Endothelial cell of umbilical vein (primary cell): ENCODE measurements at regions of chr6 and their contacts with region 1.

Region 1: GRCh38 chr6:79078075-79079025 is at the start of gene PHIP:
- DNase-seq: peak; percentile 96
- H3K4me3 ChIP-seq: peak within 1 kb of the TSS; percentile 81 to 98 (median 90)
- H3K27ac ChIP-seq: peak within 1 kb of the TSS; percentile 84
- H3K4me1 ChIP-seq: peaks cover 20% of the 10 kb centered on the region
- H3K27me3 ChIP-seq: no peaks in the 10 kb centered on the region
- CTCF ChIP-seq: no peak
- POLR2A ChIP-seq: peak; percentile 70
- total RNA-seq, gene PHIP: 26.0 and 28.4 TPM in 2 replicates

Region 2: DNA sequence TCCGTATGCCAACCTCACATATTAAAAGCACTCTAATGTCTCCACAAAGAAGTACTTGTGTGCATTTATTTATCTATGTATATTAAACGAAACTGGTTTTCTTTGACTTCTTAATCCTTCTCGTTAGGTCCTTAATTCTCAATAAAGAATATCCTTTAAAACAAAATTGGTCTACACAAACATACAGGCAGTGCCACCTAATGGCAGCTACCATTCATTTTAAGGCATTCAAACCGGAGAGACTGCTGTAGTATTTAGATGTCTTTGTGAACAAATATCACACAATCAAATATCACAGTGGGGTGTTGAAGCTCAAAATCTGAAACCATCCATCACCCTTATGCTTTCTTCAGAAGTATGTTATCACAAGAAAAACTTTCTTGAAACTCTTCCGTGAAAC is 307.6 kb before region 1 on chr6:
- CTCF ChIA-PET with region 1: no interaction called
- POLR2A ChIA-PET with region 1: no interaction called
- dilution Hi-C with region 1: no loop called
- intact Hi-C with region 1: loop called (anchors 5 kb)
- DNase-seq: no peak
- H3K4me3 ChIP-seq: no peak overlapping the region
- H3K27ac ChIP-seq: no peak overlapping the region
- H3K4me1 ChIP-seq: no peaks in the 10 kb centered on the region
- H3K27me3 ChIP-seq: peaks cover 0 to 9% of the 10 kb centered on the region in 2 experiments
- CTCF ChIP-seq: no peak
- POLR2A ChIP-seq: no peak

Region 3: DNA sequence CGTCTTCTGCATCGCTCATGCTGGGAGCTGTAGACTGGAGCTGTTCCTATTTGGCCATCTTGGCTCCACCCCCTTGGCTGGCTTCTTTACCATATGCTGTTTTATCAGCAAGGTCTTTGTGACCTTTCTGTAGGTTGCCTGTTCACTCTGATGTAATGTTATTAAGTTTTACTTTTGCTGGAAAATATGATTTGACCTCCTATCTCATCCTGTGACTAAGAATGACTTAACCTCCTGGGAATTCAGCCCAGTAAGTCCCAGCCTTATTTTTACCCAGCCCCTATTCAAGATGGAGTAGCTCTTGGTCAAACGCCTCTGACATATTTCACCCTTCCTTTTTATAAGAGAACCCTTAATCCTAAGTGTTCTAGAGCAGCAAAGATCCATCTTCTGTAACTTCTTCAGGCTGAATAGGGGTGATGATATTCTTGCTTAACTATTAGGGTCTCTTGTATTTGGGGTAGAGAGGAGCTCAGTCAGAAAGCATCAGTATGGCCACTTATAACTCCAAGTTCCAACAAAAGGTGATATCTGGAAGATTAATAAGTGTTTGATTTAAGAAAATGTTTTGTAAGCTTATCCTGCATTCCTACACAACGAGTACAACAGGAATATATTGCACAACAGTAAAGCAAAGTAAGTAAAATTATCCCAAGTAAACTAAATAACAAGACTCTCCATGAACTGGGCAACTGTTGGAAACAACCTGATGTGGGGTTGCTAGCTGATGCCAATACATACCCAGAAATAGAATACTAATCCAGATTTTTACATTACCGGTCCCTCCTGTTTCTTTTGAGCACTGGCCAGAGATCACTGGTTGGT is 179.2 kb after region 1 on chr6:
- CTCF ChIA-PET with region 1: no interaction called
- POLR2A ChIA-PET with region 1: no interaction called
- dilution Hi-C with region 1: no loop called
- intact Hi-C with region 1: no loop called
- DNase-seq: peak; percentile 68
- H3K4me3 ChIP-seq: no peak overlapping the region
- H3K27ac ChIP-seq: no peak overlapping the region
- H3K4me1 ChIP-seq: no peaks in the 10 kb centered on the region
- H3K27me3 ChIP-seq: no peaks in the 10 kb centered on the region
- CTCF ChIP-seq: no peak
- POLR2A ChIP-seq: no peak

Region 4: DNA sequence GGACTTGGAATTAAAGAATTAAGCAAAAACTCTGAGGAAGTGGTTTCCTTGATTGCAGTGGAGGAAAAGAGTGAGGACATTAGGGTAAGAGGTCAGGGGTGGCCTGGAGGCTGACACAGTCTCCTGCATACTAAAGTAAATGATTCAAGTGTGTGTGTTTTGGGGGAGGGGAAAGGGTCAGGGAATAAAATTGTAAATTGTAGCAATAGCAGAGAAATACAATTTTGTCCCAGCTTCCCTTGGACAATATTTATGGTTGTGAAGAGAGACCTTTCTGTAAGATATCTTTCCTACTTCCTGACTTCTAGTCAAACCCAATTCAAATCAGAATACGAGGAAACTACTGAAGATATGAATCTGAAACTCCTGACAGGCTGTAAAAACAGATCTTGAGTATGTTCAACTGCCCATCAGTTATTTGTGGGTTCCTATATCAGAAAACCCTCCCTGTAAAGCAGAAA is 299.6 kb after region 1 on chr6:
- CTCF ChIA-PET with region 1: no interaction called
- POLR2A ChIA-PET with region 1: no interaction called
- dilution Hi-C with region 1: no loop called
- intact Hi-C with region 1: loop called (anchors 5 kb)
- DNase-seq: peak; percentile 93
- H3K4me3 ChIP-seq: peak overlapping the region in 1 of 3 experiments; percentile 47
- H3K27ac ChIP-seq: peak overlapping the region; percentile 78
- H3K4me1 ChIP-seq: peaks cover 42% of the 10 kb centered on the region
- H3K27me3 ChIP-seq: no peaks in the 10 kb centered on the region
- CTCF ChIP-seq: no peak
- POLR2A ChIP-seq: peak; percentile 50

Region 5: GRCh38 chr6:79536954-79537747 is 458.8 kb after region 1 on chr6 and contains the start of gene LCA5:
- CTCF ChIA-PET with region 1: no interaction called
- POLR2A ChIA-PET with region 1: no interaction called
- dilution Hi-C with region 1: no loop called
- intact Hi-C with region 1: loop called (anchors 1 kb)
- DNase-seq: peak; percentile 98
- H3K4me3 ChIP-seq: peak within 1 kb of the TSS; percentile 66 to 94 (median 79)
- H3K27ac ChIP-seq: peak within 1 kb of the TSS; percentile 73
- H3K4me1 ChIP-seq: peaks cover 12% of the 10 kb centered on the region
- H3K27me3 ChIP-seq: no peaks in the 10 kb centered on the region
- CTCF ChIP-seq: no peak
- POLR2A ChIP-seq: peak; percentile 80
- total RNA-seq, gene LCA5: 4.2 and 4.9 TPM in 2 replicates

Region 6: GRCh38 chr6:79672631-79673111 is 594.3 kb after region 1 on chr6:
- CTCF ChIA-PET with region 1: interaction called, 3 read pairs
- POLR2A ChIA-PET with region 1: no interaction called
- dilution Hi-C with region 1: no loop called
- intact Hi-C with region 1: loop called (anchors 5 kb)
- DNase-seq: peak; percentile 68
- H3K4me3 ChIP-seq: no peak overlapping the region
- H3K27ac ChIP-seq: peak overlapping the region; percentile 39
- H3K4me1 ChIP-seq: peaks cover 29% of the 10 kb centered on the region
- H3K27me3 ChIP-seq: no peaks in the 10 kb centered on the region
- CTCF ChIP-seq: peak; percentile 39 to 48
- POLR2A ChIP-seq: no peak

Region 7: GRCh38 chr6:79821859-79822258 is 743.5 kb after region 1 on chr6:
- CTCF ChIA-PET with region 1: no interaction called
- POLR2A ChIA-PET with region 1: no interaction called
- dilution Hi-C with region 1: no loop called
- intact Hi-C with region 1: no loop called
- DNase-seq: no peak
- H3K4me3 ChIP-seq: no peak overlapping the region
- H3K27ac ChIP-seq: no peak overlapping the region
- H3K4me1 ChIP-seq: no peaks in the 10 kb centered on the region
- H3K27me3 ChIP-seq: peaks cover 4 to 7% of the 10 kb centered on the region in 2 experiments
- CTCF ChIP-seq: no peak
- POLR2A ChIP-seq: no peak